ENCODE measurements at regions of chr7 and their contacts with region 1.

Region 1: GRCh38 chr7:108049962-108050361 is 47.0 kb upstream of the LAMB1 start:
- DNase-seq: no peak
- ATAC-seq: no peak

Region 2: GRCh38 chr7:107355616-107356015 is 694.3 kb before region 1 on chr7:
- intact Hi-C with region 1: no loop called
- DNase-seq: no peak
- ATAC-seq: no peak

Region 3: DNA sequence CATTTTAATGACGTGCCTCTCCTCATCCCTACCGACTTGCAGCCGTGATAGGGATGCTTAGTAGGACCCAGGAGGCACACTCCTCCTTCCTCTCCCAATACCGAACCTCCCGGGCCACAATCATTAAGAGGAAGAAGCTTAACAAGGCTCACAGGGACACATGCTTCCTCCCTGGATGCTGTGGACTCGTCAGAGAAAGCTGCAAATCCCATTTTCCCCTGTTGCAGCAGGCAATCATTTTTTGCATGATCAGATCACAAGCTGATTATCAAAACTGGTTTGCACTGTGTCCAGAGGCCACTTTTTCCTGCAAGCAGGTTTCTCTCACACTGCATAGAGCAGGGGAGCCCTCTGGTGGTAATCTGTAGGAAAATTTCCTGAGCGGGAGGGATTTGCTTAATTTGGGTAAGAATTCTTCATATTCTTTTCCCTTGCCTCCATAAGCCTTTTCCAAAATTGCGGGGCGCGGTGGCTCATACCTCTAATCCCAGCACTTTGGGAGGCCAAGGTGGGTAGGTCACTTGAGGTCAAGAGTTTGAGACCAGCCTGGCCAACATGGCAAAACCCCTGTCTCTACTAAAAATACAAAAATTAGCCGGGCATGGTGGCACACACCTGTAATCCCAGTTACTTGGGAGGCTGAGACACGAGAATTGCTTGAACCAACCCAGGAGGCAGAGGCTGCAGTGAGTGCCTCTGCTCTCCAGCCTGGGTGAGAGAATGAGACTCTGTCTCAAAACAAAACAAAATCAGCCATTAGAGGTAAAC is 96.3 kb after region 1 on chr7:
- intact Hi-C with region 1: loop called (anchors 10 kb)
- DNase-seq: peak; percentile 28
- ATAC-seq: peak; percentile 92

Region 4: GRCh38 chr7:108561047-108561619 is 511.2 kb after region 1 on chr7:
- intact Hi-C with region 1: no loop called
- DNase-seq: no peak
- ATAC-seq: peak; percentile 65

Measured in left ventricle myocardium superior (tissue), 1 donor.